ENCODE measurements at regions of chr14 and their contacts with region 1.

Region 1: GRCh38 chr14:33578461-33579216 is 372.2 kb downstream of the EGLN3 start:
- DNase-seq: no peak
- ATAC-seq: no peak
- H3K4me3 ChIP-seq: no peak overlapping the region
- H3K4me3 Mint-ChIP-seq: no peak overlapping the region
- H3K27ac ChIP-seq: no peak overlapping the region
- H3K27ac Mint-ChIP-seq: no peak overlapping the region
- H3K4me1 ChIP-seq: no peaks in the 10 kb centered on the region
- H3K4me1 Mint-ChIP-seq: no peaks in the 10 kb centered on the region
- H3K27me3 ChIP-seq: no peaks in the 10 kb centered on the region
- H3K27me3 Mint-ChIP-seq: no peaks in the 10 kb centered on the region
- CTCF ChIP-seq: no peak

Region 2: DNA sequence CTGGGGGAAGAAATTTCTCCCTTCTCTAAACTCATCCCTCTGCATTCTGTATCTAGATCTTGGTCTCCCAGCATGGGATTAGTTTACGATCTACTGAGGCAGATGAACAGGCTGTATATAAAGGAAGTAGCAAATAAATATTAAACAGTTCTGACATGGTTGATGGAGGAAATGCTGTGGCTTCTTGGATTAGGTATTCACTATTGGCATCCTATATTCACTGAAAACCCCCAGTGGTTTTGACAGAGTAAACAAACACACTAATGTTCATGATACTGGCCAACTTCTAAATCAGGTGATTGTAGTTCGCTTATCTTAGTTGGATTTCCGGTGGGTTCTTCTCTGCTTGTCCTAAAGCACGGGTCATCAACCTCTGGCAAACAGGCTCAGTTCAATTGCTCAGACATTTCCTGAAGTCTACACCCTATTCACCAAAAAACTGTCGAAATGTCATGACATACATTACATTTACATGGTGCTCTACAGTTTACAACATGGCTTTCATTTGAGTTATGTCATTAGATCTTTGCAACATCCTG is 61.7 kb before region 1 on chr14:
- CTCF ChIA-PET with region 1: no interaction called
- POLR2A ChIA-PET with region 1: interaction called, 10 read pairs
- intact Hi-C with region 1: no loop called
- DNase-seq: no peak
- ATAC-seq: no peak
- H3K4me3 ChIP-seq: no peak overlapping the region
- H3K4me3 Mint-ChIP-seq: no peak overlapping the region
- H3K27ac ChIP-seq: no peak overlapping the region
- H3K27ac Mint-ChIP-seq: no peak overlapping the region
- H3K4me1 ChIP-seq: no peaks in the 10 kb centered on the region
- H3K4me1 Mint-ChIP-seq: no peaks in the 10 kb centered on the region
- H3K27me3 ChIP-seq: no peaks in the 10 kb centered on the region
- H3K27me3 Mint-ChIP-seq: no peaks in the 10 kb centered on the region
- CTCF ChIP-seq: no peak

Measured in CD8-positive, alpha-beta T cell (primary cell).